ENCODE measurements at regions of chr7 and their contacts with region 1.

Region 1: DNA sequence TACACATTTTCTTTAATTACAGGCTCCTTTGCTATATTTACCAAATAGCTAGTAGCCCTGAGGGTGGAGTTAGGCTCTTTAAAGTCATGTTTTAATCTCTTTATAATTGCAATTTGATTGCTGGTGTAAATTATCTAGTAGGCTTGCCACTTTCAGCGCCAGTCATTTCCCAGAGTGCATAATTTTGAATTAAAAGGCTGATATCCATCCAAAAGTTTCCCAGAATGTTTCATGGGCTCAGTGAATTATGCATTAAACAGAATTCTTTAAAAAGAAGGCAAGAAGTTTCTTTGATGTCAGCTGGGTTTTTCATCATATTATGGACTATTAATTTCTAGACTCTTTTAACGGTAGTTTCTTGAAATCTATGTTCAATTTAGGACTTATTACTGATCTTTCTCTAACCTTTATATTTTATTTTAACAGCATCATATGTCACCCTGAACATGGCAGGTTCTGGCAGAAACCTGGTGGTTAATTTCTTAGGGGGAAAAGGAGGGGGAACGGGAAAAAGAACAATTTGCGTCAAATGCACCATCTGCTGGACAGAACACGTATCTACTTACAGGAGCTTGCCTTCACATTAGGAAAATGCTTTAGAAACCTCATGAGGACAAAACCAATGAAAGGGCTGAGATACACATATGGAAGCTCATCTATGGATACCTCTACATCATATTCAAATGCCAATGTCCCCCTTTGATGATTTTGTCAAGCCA is 171.1 kb downstream of the GRM3 start:
- DNase-seq: peak; percentile 33
- H3K4me3 ChIP-seq: no peak overlapping the region
- H3K27ac ChIP-seq: no peak overlapping the region
- H3K4me1 ChIP-seq: no peaks in the 10 kb centered on the region
- H3K27me3 ChIP-seq: peaks cover 6% of the 10 kb centered on the region
- CTCF ChIP-seq: peak; percentile 61

Region 2: DNA sequence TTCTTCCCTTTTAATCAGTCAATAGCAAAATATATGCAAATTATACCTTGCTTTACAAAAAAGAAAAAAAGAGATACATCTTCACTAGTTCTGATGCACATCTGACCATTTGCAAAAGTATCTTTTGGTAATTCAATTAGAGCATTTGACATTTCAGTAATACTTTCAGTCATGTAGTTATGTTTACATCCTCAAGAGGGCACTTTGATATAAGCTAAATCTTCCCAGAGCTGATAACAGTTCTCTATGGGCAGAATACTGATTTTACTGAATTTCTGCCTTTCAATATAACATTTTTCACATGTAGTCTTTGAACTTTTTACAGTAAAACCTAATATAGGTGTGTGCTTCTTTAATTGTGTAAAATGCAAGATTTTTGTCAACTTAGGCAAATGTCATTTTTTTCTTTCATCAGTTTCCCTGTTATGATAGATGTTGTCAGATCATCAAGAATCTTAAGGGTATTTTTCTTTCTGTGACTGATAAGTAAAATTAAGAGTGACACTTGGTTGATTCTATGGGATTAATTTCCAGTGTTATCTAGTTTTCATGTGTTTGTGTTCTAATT is 924.5 kb before region 1 on chr7:
- CTCF ChIA-PET with region 1: interaction called, 5 read pairs
- POLR2A ChIA-PET with region 1: no interaction called
- intact Hi-C with region 1: loop called (anchors 2 kb)
- DNase-seq: peak; percentile 34
- H3K4me3 ChIP-seq: no peak overlapping the region
- H3K27ac ChIP-seq: no peak overlapping the region
- H3K4me1 ChIP-seq: no peaks in the 10 kb centered on the region
- H3K27me3 ChIP-seq: no peaks in the 10 kb centered on the region
- CTCF ChIP-seq: peak; percentile 66

Region 3: DNA sequence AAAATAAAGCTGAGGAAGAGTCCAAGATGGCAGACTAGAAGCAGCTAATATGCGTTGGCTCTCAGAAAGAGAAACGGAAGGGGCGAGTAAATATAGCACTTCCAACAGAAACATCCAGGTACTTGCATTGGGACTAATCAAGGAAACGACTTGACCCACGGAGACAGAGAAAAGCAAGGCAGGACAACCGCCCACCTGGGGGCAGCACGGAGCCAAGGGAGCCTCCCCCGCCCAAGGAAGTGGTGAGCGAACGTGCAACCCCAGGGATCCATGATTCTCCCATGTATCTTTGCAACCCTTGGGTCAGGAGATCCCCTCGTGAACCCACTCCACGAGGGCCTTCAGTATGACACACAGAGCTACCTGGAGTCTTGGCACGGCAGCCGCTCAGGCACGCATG is 216.5 kb before region 1 on chr7:
- CTCF ChIA-PET with region 1: no interaction called
- POLR2A ChIA-PET with region 1: no interaction called
- intact Hi-C with region 1: loop called (anchors 5 kb)
- DNase-seq: peak; percentile 39
- H3K4me3 ChIP-seq: no peak overlapping the region
- H3K27ac ChIP-seq: no peak overlapping the region
- H3K4me1 ChIP-seq: no peaks in the 10 kb centered on the region
- H3K27me3 ChIP-seq: no peaks in the 10 kb centered on the region
- CTCF ChIP-seq: peak; percentile 59

Region 4: GRCh38 chr7:86760236-86760635 is 54.6 kb before region 1 on chr7:
- CTCF ChIA-PET with region 1: no interaction called
- POLR2A ChIA-PET with region 1: no interaction called
- intact Hi-C with region 1: loop called (anchors 5 kb)
- DNase-seq: no peak
- H3K4me3 ChIP-seq: no peak overlapping the region
- H3K27ac ChIP-seq: no peak overlapping the region
- H3K4me1 ChIP-seq: no peaks in the 10 kb centered on the region
- H3K27me3 ChIP-seq: peaks cover 26% of the 10 kb centered on the region
- CTCF ChIP-seq: no peak

Region 5: GRCh38 chr7:87152107-87152844 is 337.5 kb after region 1 on chr7 and contains the start of gene DMTF1:
- CTCF ChIA-PET with region 1: no interaction called
- POLR2A ChIA-PET with region 1: no interaction called
- intact Hi-C with region 1: no loop called
- DNase-seq: peak; percentile 96
- H3K4me3 ChIP-seq: peak within 1 kb of the TSS; percentile 89
- H3K27ac ChIP-seq: peak within 1 kb of the TSS; percentile 99
- H3K4me1 ChIP-seq: peaks cover 11% of the 10 kb centered on the region
- H3K27me3 ChIP-seq: no peaks in the 10 kb centered on the region
- CTCF ChIP-seq: no peak
- total RNA-seq, gene DMTF1: 90.5 and 94.3 TPM in 2 replicates

Measured in A673 (cell line).